Naive thymus-derived CD8-positive, alpha-beta T cell (primary cell): ENCODE measurements at regions of chr2 and their contacts with region 1.

Region 1: DNA sequence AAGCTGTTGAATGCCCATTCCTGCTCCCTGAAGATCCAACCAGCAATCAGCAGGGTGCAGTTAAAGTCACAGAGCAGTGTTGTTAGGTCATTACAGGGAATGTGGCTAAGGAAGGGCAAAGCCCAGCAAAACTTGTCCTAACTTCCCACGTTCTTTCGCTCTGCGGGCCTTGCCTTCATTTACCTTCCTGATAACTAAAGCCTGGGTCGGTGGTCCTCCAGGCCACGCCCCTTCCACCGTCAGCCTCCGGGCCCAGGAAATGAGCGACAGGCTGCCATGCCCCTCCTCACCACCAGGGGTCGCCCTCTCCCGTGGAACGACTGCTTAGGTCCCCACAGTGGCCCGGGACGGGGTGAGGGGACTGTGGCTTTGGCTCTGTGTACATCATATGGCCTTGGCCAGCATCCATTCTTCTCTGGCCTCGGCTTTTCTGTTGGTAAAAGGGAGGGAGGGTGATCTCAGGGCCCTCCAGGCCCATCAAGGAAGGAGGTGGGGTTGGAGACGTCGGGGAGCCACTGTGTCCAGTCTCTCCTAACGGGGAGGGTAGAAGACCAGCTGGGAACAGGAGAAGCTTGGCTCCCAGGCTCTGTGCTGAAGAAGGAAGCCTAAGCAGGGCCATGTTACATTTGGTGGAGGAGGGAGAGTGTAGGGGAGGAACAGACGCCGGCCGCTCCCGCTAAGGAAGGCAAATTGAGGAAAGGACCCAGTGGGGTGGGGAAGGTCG is 2.2 kb downstream of the SH2D6 start:
- DNase-seq: peak; percentile 75 to 92 (median 85)
- ATAC-seq: peak; percentile 65 to 66
- H3K4me3 Mint-ChIP-seq: peak overlapping the region; percentile 46 to 84 (median 69)
- H3K27ac Mint-ChIP-seq: peak overlapping the region in 8 of 10 donors; percentile 68 to 95 (median 82)
- H3K4me1 Mint-ChIP-seq: peaks cover 8 to 28% (median 26%) of the 10 kb centered on the region in 4 donors
- H3K27me3 Mint-ChIP-seq: no peaks in the 10 kb centered on the region

Region 2: DNA sequence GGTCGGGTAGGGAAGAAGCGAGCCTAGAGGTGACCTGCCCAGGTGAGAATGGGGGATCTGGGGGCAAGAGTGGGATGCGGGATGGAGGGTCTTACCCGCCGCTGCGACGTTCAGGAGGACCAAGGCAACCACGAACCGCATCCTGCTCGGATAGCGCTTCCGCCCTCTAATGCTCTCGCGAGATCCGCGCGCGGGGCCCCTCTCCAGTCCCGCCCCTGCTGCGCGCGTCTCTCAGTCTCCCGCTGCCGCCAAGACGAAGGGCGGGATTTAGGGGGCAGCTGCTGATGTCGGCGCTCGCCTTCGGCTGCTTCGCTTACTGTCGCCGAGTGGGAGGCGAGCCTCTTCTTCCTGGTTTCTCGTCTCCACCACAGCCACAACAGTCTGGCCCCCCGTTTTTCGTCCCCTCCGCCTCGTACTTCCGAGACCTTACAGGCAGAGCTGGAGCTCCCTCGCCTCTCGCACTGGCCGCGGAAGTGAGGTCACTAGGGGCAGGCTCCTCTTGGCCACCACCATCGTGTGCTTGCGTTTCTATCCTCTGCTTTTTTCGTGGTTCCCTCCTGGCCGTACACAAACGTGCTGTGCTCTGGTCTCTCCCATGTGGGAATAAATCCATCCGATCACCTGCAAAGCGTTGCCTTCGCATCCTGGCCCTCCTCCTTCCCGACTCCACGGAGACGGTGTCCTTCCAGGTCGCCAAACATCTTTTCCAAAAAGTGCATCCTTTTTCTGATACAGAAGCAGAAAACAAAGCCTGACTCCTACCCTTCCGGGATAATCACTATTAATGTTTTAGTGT is 92.7 kb before region 1 on chr2 and contains the start of gene TGOLN2:
- POLR2A ChIA-PET with region 1: interaction called, 25 read pairs
- DNase-seq: peak; percentile 89 to 96 (median 94)
- ATAC-seq: peak; percentile 83 to 87
- H3K4me3 Mint-ChIP-seq: peak within 1 kb of the TSS; percentile 96 to 100 (median 99)
- H3K27ac Mint-ChIP-seq: peak within 1 kb of the TSS; percentile 97 to 100 (median 100)
- H3K4me1 Mint-ChIP-seq: peaks cover 27 to 53% (median 42%) of the 10 kb centered on the region in 4 donors
- H3K27me3 Mint-ChIP-seq: no peaks in the 10 kb centered on the region
- polyA plus RNA-seq, gene TGOLN2: 55.6 to 80.0 (median 65.1) TPM

Region 3: DNA sequence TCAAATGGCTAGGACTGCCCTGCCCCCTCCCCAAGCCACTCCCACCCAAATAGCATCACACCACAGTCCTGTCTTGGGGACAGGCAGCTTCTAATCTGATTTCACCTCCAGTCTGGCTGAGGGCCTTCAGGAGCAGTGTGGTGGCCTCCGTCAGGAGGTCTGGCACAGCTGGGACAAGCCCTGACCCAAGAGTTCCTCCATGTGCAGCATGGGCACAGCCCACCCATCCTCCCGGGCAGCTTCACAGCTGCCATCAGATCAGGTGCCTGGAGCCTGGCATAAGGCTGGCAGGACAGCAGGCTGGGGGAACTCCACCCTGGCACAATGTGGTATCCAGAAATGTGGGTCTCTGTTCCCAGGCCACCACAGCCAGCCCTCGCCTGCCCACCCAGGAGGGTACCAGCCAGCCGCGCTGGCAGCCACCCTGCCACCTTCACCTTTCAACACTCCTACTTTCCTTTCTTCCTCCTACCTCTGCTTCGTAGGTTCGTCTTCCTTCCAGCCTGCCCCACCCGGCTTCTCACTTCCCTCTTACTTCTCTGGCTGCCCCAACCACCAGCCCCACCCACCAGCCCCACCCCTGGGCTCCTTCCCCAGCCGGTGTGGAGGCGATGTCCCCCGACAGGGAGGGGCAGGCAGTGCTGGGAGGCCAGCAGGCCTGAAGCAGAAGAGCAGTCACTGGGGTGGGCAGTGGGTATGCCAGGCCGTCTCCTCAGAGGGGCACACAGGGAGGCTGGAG is 10.7 kb before region 1 on chr2 and contains the start of gene CAPG:
- POLR2A ChIA-PET with region 1: interaction called, 23 read pairs
- DNase-seq: peak in 4 of 10 donors; percentile 15 to 63 (median 30)
- ATAC-seq: peak in 1 of 2 donors; percentile 21
- H3K4me3 Mint-ChIP-seq: peak within 1 kb of the TSS; percentile 58 to 82 (median 72)
- H3K27ac Mint-ChIP-seq: peak within 1 kb of the TSS in 9 of 10 donors; percentile 31 to 80 (median 63)
- H3K4me1 Mint-ChIP-seq: peaks cover 30 to 87% (median 64%) of the 10 kb centered on the region in 4 donors
- H3K27me3 Mint-ChIP-seq: peaks cover 0 to 3% (median 0%) of the 10 kb centered on the region in 5 donors
- polyA plus RNA-seq, gene CAPG: 15.7 to 18.6 (median 16.8) TPM

Region 4: GRCh38 chr2:85457877-85458316 is 37.2 kb after region 1 on chr2:
- POLR2A ChIA-PET with region 1: no interaction called
- DNase-seq: no peak
- ATAC-seq: no peak
- H3K4me3 Mint-ChIP-seq: no peak overlapping the region
- H3K27ac Mint-ChIP-seq: no peak overlapping the region
- H3K4me1 Mint-ChIP-seq: peaks cover 0 to 5% (median 0%) of the 10 kb centered on the region in 4 donors
- H3K27me3 Mint-ChIP-seq: peaks cover 0 to 1% (median 0%) of the 10 kb centered on the region in 5 donors

Region 5: GRCh38 chr2:85538486-85539360 is 118.0 kb after region 1 on chr2 and contains the start of gene MAT2A:
- POLR2A ChIA-PET with region 1: interaction called, 67 read pairs
- DNase-seq: peak; percentile 71 to 91 (median 86)
- ATAC-seq: peak; percentile 74 to 76
- H3K4me3 Mint-ChIP-seq: peak within 1 kb of the TSS; percentile 91 to 96 (median 95)
- H3K27ac Mint-ChIP-seq: peak within 1 kb of the TSS; percentile 90 to 98 (median 95)
- H3K4me1 Mint-ChIP-seq: peaks cover 21 to 50% (median 40%) of the 10 kb centered on the region in 4 donors
- H3K27me3 Mint-ChIP-seq: no peaks in the 10 kb centered on the region
- polyA plus RNA-seq, gene MAT2A: 68.1 to 103 (median 73.0) TPM

Region 6: DNA sequence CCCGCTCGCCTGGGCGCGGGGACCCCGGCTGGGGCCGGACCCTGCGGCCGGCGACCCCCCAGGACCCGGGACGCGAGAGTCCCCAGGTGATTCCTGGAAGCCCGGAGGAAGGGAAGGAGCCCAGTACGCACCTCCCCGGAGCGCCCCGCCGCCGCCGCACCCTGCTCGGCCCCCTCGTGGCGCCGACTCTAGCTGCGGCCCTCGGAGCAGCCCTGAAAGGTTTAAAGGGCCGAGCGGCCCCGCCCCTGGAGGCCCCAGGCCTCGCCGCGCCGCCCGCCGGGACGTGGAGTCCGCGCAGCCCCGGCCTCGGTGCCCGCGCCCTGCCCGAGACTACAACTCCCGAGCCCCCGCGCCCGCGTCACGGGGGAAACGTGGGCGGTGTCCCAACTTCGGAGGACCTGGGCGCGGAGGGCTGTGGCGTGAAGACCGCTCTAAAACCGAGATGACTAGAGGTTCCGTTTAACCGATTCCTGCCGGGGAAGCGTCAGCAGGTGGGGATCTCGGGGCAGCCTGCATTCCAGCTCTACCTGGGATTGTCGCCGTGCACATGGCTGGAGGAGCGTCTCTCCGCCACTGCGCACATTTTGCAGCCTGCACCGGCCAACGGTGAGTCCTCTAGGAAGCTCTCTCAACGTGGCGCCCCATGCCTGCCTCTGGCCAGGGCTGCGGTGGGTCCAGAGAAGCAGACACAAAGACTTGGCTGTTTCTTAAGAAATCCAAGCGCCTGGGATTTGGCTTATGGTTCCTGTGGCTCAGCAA is 182.0 kb after region 1 on chr2 and contains the start of gene TMEM150A:
- POLR2A ChIA-PET with region 1: interaction called, 16 read pairs
- DNase-seq: peak; percentile 76 to 91 (median 82)
- ATAC-seq: peak; percentile 91 to 92
- H3K4me3 Mint-ChIP-seq: peak within 1 kb of the TSS; percentile 85 to 95 (median 90)
- H3K27ac Mint-ChIP-seq: peak within 1 kb of the TSS; percentile 63 to 94 (median 90)
- H3K4me1 Mint-ChIP-seq: peaks cover 18 to 47% (median 34%) of the 10 kb centered on the region in 4 donors
- H3K27me3 Mint-ChIP-seq: no peaks in the 10 kb centered on the region
- polyA plus RNA-seq, gene TMEM150A: 11.6 to 15.1 (median 13.8) TPM